A549 (cell line): ENCODE measurements at regions of chr2 and their contacts with region 1.

Region 1: DNA sequence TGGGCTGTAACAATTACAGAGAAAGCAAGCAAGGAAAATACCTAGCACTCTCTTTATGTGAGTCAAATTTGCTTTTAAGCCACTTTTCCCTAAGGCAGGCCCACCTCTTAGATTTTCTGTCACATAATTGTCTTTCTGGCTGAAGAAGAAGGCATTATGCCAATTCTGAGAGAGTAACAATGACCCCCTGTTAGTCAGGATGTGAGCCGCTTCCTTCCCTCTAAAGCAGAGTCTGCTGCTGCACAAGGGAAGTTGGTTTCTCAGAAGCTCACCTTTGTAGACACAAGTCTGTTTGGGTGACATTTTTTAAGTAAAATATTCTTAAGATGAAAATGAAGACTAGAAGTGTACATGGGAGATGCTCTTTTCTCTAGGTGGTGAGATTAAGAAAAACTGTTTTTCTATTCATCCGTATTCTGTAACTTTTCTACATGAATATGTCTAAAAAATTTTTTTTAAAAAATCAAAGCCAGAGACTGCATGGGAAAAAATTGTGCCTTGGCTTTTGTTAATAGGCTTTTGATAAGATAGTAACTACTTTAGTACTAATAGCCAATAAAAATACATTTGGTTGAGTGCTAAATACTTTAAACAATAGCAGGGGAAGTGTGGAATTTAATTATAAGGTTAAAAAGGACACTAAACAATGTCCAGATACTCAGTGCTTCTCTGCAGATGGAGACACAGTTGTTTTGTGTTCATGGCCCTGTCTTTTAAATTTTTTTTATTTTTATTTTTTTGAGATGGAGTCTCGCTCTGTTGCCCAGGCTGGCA is 33.4 kb upstream of the VPS54 start:
- DNase-seq: no peak
- ATAC-seq: no peak
- H3K4me3 ChIP-seq: no peak overlapping the region
- H3K27ac ChIP-seq: no peak overlapping the region
- H3K4me1 ChIP-seq: no peaks in the 10 kb centered on the region
- CTCF ChIP-seq: no peak
- EP300 ChIP-seq: no peak
- POLR2A ChIP-seq: no peak
- RAD21 ChIP-seq: no peak

Region 2: DNA sequence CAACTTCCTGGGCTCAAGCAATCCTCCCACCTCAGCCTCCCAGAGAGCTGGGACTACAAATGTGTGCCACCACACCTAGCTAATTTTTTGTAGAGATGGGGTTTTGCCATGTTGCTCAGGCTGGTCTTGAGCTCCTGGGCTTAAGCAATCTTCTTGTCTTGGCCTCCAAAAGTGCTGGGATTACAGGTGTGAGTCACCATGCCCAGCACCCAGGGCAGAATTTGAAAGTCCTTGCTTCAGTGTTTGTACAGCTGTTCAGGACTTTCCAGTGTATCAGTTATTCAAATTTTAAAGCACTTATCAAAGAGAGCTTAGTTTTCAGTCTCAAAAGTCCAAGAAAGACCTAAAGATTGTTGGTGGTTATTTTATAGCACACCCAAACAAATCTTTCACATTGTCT is 10.2 kb after region 1 on chr2:
- CTCF ChIA-PET with region 1: interaction called, 23 read pairs
- POLR2A ChIA-PET with region 1: no interaction called
- DNase-seq: peak in 1 of 2 experiments; percentile 31
- ATAC-seq: peak in 1 of 2 experiments; percentile 59; a peak in 3 of 6 replicates
- H3K4me3 ChIP-seq: no peak overlapping the region
- H3K27ac ChIP-seq: no peak overlapping the region
- H3K4me1 ChIP-seq: peaks cover 10% of the 10 kb centered on the region; the same call in 1 of the 3 replicates
- CTCF ChIP-seq: no peak
- EP300 ChIP-seq: no peak
- POLR2A ChIP-seq: no peak
- RAD21 ChIP-seq: no peak

Region 3: GRCh38 chr2:64263309-64263708 is 210.7 kb after region 1 on chr2:
- CTCF ChIA-PET with region 1: interaction called, 11 read pairs
- POLR2A ChIA-PET with region 1: no interaction called
- DNase-seq: no peak
- ATAC-seq: no peak
- H3K4me3 ChIP-seq: no peak overlapping the region
- H3K27ac ChIP-seq: no peak overlapping the region
- H3K4me1 ChIP-seq: 0 out of 3 replicates have a peak, but pooled peaks cover 9% of the 10 kb centered on the region
- CTCF ChIP-seq: no peak
- EP300 ChIP-seq: no peak
- POLR2A ChIP-seq: no peak
- RAD21 ChIP-seq: no peak

Region 4: DNA sequence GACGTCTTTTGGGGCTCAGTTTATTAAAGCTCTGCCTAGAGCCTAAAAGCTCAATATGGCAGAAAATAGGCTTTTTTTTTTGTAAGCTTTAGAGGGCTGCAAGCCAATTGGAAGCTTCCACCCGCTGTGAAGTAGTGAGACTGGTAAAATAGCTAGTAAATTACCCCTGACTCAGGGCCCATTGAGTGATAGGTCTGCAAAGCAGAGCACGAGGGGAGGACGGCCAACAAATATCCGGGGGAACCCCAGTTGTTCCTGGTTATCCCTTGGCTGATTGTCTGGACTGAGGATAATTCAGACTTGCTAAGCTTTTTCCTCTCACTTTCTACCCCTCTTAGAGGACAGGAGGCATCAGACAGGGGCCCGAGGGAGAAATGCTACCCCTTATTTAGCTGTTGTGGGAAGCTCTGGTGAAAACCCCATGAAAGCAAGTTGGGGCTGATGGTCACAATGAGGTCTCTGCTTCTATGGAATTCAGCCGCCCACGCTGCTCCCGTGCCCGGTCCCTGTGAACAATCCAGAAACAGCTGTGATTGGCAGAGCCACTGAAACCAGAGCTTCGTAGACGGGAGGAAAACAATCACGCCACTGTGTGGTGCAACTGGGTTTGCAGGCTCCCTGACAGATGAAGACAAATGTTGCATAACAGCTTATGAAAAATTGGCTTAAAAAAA is 259.4 kb after region 1 on chr2:
- CTCF ChIA-PET with region 1: interaction called, 24 read pairs
- POLR2A ChIA-PET with region 1: no interaction called
- DNase-seq: peak; percentile 18 to 53
- ATAC-seq: peak; percentile 55 to 87; a peak in 5 of 6 replicates
- H3K4me3 ChIP-seq: no peak overlapping the region
- H3K27ac ChIP-seq: no peak overlapping the region
- H3K4me1 ChIP-seq: no peaks in the 10 kb centered on the region
- CTCF ChIP-seq: 0 out of 3 replicates have a peak, but pooled peaks have one; percentile 17
- EP300 ChIP-seq: no peak
- POLR2A ChIP-seq: no peak
- RAD21 ChIP-seq: peak; percentile 30 to 34; a peak in 3 of 5 replicates